ENCODE measurements at regions of chr21 and their contacts with region 1.

Region 1: DNA sequence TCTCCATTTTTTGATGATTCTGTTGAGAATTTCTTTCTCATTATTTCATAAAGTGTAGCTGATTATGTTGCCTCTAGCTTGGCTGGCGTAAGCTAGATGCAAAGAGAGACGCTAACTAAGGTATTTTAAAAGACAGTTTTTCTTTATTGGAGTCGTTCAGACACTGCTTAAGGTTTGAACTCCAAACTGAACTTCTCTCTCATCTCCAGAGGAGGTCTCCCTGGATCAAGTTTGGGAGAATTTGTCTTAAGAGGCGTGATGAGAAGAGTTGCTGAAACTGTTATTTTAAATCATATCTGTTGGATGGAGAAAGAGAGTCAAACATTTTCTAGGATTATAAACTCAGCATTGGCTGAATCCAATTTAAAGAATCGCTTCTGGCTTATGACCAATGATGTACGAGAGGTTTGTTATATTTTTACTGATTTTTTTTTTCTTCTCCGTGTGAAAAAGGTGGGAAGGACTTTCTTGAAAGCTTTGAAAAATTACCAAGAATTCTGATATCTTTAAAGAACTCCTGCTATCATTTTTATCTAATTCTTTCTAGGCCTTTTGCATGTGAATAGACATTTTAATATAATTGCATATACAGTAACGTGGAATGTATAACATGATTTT is 34.0 kb downstream of the MAP3K7CL start:
- DNase-seq: no peak
- ATAC-seq: peak in 7 of 8 donors; percentile 73 to 86 (median 82)
- H3K4me3 ChIP-seq: no peak overlapping the region
- H3K27ac ChIP-seq: peak overlapping the region in 7 of 10 donors; percentile 2 to 84 (median 46)
- H3K4me1 ChIP-seq: peaks cover 0 to 58% (median 17%) of the 10 kb centered on the region in 9 donors
- H3K27me3 ChIP-seq: no peaks in the 10 kb centered on the region
- CTCF ChIP-seq: peak; percentile 29 to 85 (median 69)

Region 2: GRCh38 chr21:29342363-29342957 is 178.0 kb after region 1 on chr21:
- intact Hi-C with region 1: loop called in 5 of 10 experiments (anchors 5 to 10 kb)
- DNase-seq: peak; percentile 63 to 67
- ATAC-seq: peak; percentile 75 to 97 (median 90)
- H3K4me3 ChIP-seq: peak overlapping the region in 6 of 10 donors; percentile 6 to 23 (median 16)
- H3K27ac ChIP-seq: peak overlapping the region in 9 of 10 donors; percentile 10 to 72 (median 50)
- H3K4me1 ChIP-seq: peaks cover 0 to 62% (median 42%) of the 10 kb centered on the region in 9 donors
- H3K27me3 ChIP-seq: no peaks in the 10 kb centered on the region
- CTCF ChIP-seq: peak in 1 of 9 donors; percentile 10

Region 3: GRCh38 chr21:29365661-29366265 is 201.3 kb after region 1 on chr21:
- intact Hi-C with region 1: loop called in 6 of 10 experiments (anchors 2 to 5 kb)
- DNase-seq: no peak
- ATAC-seq: no peak
- H3K4me3 ChIP-seq: no peak overlapping the region
- H3K27ac ChIP-seq: no peak overlapping the region
- H3K4me1 ChIP-seq: no peaks in the 10 kb centered on the region
- H3K27me3 ChIP-seq: no peaks in the 10 kb centered on the region
- CTCF ChIP-seq: no peak